ENCODE measurements at regions of chr1 and their contacts with region 1.

Region 1: GRCh38 chr1:22105611-22106207 is 37.2 kb downstream of the WNT4 start:
- DNase-seq: no peak
- H3K4me3 ChIP-seq: no peak overlapping the region
- H3K27me3 ChIP-seq: no peaks in the 10 kb centered on the region
- CTCF ChIP-seq: peak; percentile 85

Region 2: GRCh38 chr1:22077728-22078127 is 28.0 kb before region 1 on chr1:
- CTCF ChIA-PET with region 1: no interaction called
- POLR2A ChIA-PET with region 1: interaction called, 13 read pairs
- DNase-seq: no peak
- H3K4me3 ChIP-seq: no peak overlapping the region
- H3K27me3 ChIP-seq: no peaks in the 10 kb centered on the region
- CTCF ChIP-seq: no peak

Region 3: GRCh38 chr1:22093513-22093912 is 12.2 kb before region 1 on chr1:
- CTCF ChIA-PET with region 1: interaction called, 11 read pairs
- POLR2A ChIA-PET with region 1: no interaction called
- DNase-seq: no peak
- H3K4me3 ChIP-seq: no peak overlapping the region
- H3K27me3 ChIP-seq: no peaks in the 10 kb centered on the region
- CTCF ChIP-seq: no peak

Region 4: GRCh38 chr1:22275721-22276395 is 170.1 kb after region 1 on chr1:
- CTCF ChIA-PET with region 1: interaction called, 11 read pairs
- POLR2A ChIA-PET with region 1: no interaction called
- DNase-seq: no peak
- H3K4me3 ChIP-seq: no peak overlapping the region
- H3K27me3 ChIP-seq: peaks cover 13% of the 10 kb centered on the region
- CTCF ChIP-seq: peak; percentile 95

Region 5: DNA sequence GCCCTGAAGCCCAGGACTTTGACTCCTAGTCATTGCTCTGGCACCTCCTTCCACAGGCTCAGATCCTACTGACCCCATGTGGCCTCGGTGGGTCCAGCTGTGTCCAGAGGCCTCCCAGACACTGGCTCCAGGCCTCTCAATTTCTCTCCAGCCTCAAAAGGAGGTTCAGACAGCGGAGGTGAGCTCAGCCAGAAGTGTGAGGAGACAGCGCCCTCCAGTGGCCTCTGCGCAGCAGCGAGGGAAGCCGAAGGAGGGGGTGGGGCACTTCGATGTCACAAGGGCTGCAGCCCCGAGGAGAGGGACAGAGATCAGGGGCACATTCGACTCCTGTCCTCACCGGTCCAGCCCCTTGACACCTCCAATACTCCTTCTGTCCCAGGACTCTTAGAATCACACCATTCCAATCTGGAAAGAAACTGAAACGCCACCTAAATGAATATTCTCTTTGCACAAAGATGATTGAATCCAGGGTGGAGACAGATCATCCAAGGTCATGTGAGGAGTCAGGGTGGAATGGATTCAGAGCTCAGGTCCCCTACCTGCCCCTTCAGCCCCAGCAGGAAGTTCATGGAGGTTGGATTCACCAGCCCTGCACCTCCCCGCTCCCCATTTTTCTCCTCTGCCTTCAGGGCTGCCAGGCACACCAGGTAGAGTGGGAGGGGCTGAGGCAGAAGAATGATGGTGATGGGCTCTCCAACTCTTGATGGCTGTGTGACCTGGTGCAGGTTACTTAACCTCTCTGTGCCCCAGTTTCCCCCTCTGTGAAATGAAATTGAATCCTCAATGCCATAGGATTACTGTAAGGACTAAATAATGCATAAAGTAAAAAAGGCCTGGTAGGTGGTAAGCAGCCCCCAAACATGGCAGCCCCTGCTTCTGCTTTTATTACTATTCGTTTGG is 311.1 kb after region 1 on chr1:
- CTCF ChIA-PET with region 1: interaction called, 19 read pairs
- POLR2A ChIA-PET with region 1: no interaction called
- DNase-seq: no peak
- H3K4me3 ChIP-seq: no peak overlapping the region
- H3K27me3 ChIP-seq: no peaks in the 10 kb centered on the region; the same call in 1 of the 2 replicates
- CTCF ChIP-seq: peak; percentile 96